ENCODE measurements at regions of chr6 and their contacts with region 1.

Region 1: GRCh38 chr6:42021847-42022754 is 28.2 kb upstream of the TAF8 start:
- DNase-seq: peak; percentile 86
- ATAC-seq: peak; percentile 46
- H3K4me3 ChIP-seq: peak overlapping the region in 3 of 5 experiments; percentile 4 to 46 (median 17)
- H3K4me3 Mint-ChIP-seq: peak overlapping the region; percentile 77
- H3K27ac ChIP-seq: peak overlapping the region; percentile 79 to 93
- H3K27ac Mint-ChIP-seq: peak overlapping the region; percentile 95
- H3K4me1 ChIP-seq: peaks cover 74 to 78% of the 10 kb centered on the region in 2 donors
- H3K4me1 Mint-ChIP-seq: peaks cover 77% of the 10 kb centered on the region
- H3K27me3 ChIP-seq: no peaks in the 10 kb centered on the region
- H3K27me3 Mint-ChIP-seq: no peaks in the 10 kb centered on the region
- CTCF ChIP-seq: peak; percentile 13

Region 2: DNA sequence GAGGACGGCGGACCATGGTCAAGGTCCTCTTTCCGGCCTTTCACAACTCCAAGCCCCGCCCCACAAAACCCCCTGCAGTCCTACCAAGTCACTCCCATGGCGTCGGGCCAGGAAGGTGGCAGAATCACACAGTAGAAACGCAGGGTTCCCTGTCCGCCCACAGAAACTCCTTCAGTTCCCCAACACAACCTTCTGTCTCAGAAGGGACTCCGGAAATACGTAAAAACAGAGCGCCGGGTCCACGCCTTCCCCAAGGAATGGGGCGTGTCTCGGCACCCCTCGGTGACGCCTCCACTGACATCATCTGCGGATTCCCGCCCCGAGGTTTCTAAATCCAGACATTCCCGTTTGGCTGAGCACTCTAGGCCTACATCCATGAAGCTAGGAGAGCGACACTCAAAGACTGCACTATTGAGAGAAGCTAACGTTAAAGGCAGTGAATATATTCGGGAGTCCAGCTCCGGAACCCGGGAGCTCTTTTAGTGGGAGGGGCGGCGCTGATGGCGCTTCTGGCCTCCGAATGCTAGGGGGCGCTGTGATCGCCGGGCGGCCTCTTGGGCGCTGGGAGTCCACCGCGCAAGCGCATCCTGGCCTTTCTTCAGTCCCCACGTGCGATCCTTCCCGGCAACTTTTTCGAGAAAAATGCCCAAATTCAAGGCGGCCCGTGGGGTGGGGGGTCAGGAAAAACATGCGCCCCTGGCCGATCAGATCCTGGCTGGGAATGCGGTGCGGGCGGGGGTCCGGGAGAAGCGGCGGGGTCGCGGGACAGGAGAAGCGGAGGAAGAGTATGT is 101.0 kb before region 1 on chr6 and contains the starts of genes BYSL and MED20:
- CTCF ChIA-PET with region 1: interaction called, 9 read pairs
- POLR2A ChIA-PET with region 1: interaction called, 4 read pairs
- intact Hi-C with region 1: loop called (anchors 1 kb)
- DNase-seq: peak; percentile 98
- ATAC-seq: peak; percentile 93
- H3K4me3 ChIP-seq: peak within 1 kb of the TSS; percentile 67 to 99 (median 97)
- H3K4me3 Mint-ChIP-seq: peak within 1 kb of the TSS; percentile 98
- H3K27ac ChIP-seq: peak within 1 kb of the TSS; percentile 91 to 96
- H3K27ac Mint-ChIP-seq: peak within 1 kb of the TSS; percentile 98
- H3K4me1 ChIP-seq: peaks cover 26 to 29% of the 10 kb centered on the region in 2 donors
- H3K4me1 Mint-ChIP-seq: peaks cover 47% of the 10 kb centered on the region
- H3K27me3 ChIP-seq: no peaks in the 10 kb centered on the region
- H3K27me3 Mint-ChIP-seq: no peaks in the 10 kb centered on the region
- CTCF ChIP-seq: peak; percentile 93
- total RNA-seq, gene BYSL: 10.5 and 11.1 TPM in 2 replicates
- total RNA-seq, gene MED20: 18.2 and 24.2 TPM in 2 replicates

Region 3: DNA sequence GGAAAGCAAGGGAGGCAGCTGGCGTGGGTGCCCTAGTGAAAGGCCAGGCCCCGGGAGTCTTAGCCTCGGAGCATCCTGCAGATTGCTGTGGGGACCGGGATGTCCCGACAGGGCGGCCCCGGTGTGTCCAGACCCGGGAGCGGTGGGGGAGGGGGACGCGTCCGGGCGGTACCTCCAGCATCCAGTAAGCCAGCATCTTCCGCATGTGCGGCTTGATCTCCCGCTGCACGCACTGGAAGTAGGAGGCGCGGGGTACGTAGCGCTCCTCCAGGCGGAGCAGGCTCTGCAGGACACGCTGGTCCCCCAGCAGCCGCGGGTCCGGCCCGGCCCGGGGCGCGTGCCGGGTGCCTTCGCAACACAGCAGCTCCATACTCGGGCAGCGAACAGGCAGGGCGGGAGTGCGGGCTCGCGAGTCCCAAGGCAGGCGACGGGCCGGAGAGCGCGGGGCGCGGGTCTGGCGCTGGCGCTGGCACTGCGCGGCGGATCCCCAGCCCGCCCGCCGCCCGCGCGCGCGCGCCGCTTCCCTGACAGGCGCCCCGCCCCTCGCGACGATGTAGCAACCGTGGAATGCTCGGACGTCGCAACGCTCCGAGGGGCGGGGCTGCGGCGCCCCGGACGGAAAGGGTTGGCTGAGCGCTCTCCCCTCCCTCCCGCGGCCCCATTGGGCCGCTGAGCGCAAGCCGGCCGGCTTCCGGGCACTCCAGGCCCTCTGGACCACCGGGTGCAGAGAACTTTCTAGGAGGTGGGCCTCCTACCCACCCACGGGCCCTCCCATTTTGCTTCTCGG is 80.6 kb before region 1 on chr6 and contains the start of gene CCND3:
- CTCF ChIA-PET with region 1: interaction called, 6 read pairs
- POLR2A ChIA-PET with region 1: no interaction called
- intact Hi-C with region 1: loop called (anchors 1 kb)
- DNase-seq: peak; percentile 87
- ATAC-seq: peak; percentile 94
- H3K4me3 ChIP-seq: peak within 1 kb of the TSS; percentile 61 to 77 (median 71)
- H3K4me3 Mint-ChIP-seq: peak within 1 kb of the TSS; percentile 85
- H3K27ac ChIP-seq: peak within 1 kb of the TSS; percentile 10 to 68
- H3K27ac Mint-ChIP-seq: peak within 1 kb of the TSS; percentile 87
- H3K4me1 ChIP-seq: peaks cover 51 to 58% of the 10 kb centered on the region in 2 donors
- H3K4me1 Mint-ChIP-seq: peaks cover 52% of the 10 kb centered on the region
- H3K27me3 ChIP-seq: no peaks in the 10 kb centered on the region
- H3K27me3 Mint-ChIP-seq: no peaks in the 10 kb centered on the region
- CTCF ChIP-seq: no peak
- total RNA-seq, gene CCND3: 136 and 145 TPM in 2 replicates

Region 4: DNA sequence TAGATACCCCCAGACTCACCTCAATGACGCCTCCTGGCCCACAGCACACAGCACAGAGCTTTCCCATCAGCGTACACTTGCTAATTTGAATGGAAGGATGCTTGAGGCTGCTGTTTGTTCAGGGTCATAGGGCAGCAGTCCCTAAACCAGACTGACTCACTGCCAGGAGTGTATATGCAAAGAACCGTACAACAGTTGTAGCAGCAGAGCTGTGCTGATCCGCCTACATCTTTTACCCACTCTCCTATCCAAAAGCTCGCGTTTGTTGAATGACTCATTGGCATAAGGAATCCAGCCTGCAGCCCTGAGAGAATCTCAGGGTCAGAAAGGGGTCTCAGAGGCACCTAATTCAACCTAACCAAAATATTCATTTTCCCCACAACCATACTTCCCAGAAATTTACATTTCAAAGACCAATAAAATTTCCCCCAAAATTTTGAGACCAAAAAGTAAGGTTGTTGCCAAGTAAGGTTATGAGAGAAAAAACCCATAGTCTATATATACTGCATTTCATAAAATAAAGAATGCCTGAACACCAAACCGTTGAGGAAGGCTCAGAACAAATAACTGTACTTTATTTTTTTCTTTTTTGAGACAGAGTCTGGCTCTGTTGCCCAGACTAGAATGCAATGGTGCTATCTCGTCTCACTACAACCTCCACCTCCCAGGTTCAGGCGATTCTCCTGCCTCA is 45.2 kb before region 1 on chr6:
- CTCF ChIA-PET with region 1: no interaction called
- POLR2A ChIA-PET with region 1: no interaction called
- intact Hi-C with region 1: loop called (anchors 5 kb)
- DNase-seq: no peak
- ATAC-seq: peak; percentile 39
- H3K4me3 ChIP-seq: no peak overlapping the region
- H3K4me3 Mint-ChIP-seq: peak overlapping the region; percentile 32
- H3K27ac ChIP-seq: peak overlapping the region in 1 of 2 donors; percentile 52
- H3K27ac Mint-ChIP-seq: peak overlapping the region; percentile 80
- H3K4me1 ChIP-seq: peaks cover 44 to 59% of the 10 kb centered on the region in 2 donors
- H3K4me1 Mint-ChIP-seq: peaks cover 62% of the 10 kb centered on the region
- H3K27me3 ChIP-seq: no peaks in the 10 kb centered on the region
- H3K27me3 Mint-ChIP-seq: no peaks in the 10 kb centered on the region
- CTCF ChIP-seq: no peak

Region 5: GRCh38 chr6:42009966-42010891 is 11.9 kb before region 1 on chr6:
- CTCF ChIA-PET with region 1: interaction called, 7 read pairs
- POLR2A ChIA-PET with region 1: interaction called, 6 read pairs
- intact Hi-C with region 1: loop called (anchors 2 kb)
- DNase-seq: no peak
- ATAC-seq: peak; percentile 26
- H3K4me3 ChIP-seq: no peak overlapping the region
- H3K4me3 Mint-ChIP-seq: peak overlapping the region; percentile 45
- H3K27ac ChIP-seq: peak overlapping the region in 1 of 2 donors; percentile 71
- H3K27ac Mint-ChIP-seq: peak overlapping the region; percentile 84
- H3K4me1 ChIP-seq: peaks cover 40 to 50% of the 10 kb centered on the region in 2 donors
- H3K4me1 Mint-ChIP-seq: peaks cover 58% of the 10 kb centered on the region
- H3K27me3 ChIP-seq: no peaks in the 10 kb centered on the region
- H3K27me3 Mint-ChIP-seq: no peaks in the 10 kb centered on the region
- CTCF ChIP-seq: no peak

Region 6: DNA sequence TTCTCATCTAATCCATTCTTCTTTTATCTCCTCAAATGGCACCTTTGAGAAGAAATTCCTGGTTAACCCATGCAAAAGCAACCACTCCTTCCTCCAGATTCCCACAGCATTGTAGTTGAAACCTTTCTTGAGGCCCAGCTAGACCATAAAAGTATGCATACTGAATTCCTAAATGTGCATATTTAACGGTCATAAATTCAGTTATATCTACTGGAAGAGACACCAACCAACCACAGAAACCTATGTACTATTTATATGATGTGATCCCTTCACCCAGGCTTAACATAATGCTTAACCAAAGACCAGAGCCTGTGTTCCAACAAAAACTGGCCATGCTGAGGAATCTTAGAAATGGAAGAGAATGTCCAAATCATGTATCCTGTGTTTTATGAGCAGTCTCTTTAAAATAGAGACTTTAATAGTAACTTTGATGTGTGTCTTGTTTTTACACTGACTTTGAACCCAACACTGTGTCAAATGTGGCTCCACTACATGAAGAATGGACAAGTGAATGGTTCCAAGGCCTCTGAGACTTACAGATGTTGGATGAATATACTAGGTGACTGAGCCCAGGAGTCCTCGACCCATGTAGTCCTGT is 16.8 kb after region 1 on chr6:
- CTCF ChIA-PET with region 1: interaction called, 130 read pairs
- POLR2A ChIA-PET with region 1: interaction called, 7 read pairs
- intact Hi-C with region 1: loop called (anchors 1 kb)
- DNase-seq: no peak
- ATAC-seq: no peak
- H3K4me3 ChIP-seq: peak overlapping the region in 3 of 5 experiments; percentile 23 to 35 (median 30)
- H3K4me3 Mint-ChIP-seq: peak overlapping the region; percentile 74
- H3K27ac ChIP-seq: peak overlapping the region; percentile 22 to 79
- H3K27ac Mint-ChIP-seq: peak overlapping the region; percentile 92
- H3K4me1 ChIP-seq: peaks cover 37 to 48% of the 10 kb centered on the region in 2 donors
- H3K4me1 Mint-ChIP-seq: peaks cover 50% of the 10 kb centered on the region
- H3K27me3 ChIP-seq: no peaks in the 10 kb centered on the region
- H3K27me3 Mint-ChIP-seq: no peaks in the 10 kb centered on the region
- CTCF ChIP-seq: no peak

Region 7: DNA sequence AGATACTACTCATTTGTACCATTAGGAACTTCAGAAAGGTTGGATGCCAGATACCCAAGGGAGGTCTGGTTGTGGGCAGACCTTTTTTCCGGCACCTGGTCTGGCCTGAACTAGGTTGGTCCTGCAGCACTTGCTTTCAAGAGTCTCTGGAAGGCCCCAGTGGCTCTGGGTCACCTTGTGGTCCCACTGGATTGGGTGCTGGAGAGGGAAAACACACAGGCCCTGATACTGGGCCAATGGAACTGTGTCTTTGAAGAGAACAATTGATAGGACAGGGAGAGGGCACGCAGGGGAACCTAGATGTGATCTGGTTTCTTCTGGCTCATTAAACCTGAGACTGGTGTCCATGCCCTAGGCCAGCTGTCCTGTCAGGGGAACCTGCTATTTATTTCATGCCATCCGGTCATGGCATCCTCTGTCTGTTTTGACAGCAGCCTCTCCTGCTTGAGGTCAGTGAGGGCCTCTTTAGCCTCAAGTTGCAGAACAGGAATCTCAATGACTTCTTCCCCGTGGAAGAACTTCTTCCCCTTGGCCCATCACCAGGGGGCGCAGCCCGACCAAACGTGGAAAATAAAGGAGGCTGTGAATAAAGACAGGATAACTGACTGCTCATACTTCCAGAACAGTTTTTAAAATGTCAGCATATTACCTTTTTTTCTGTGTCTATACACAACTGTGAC is 53.2 kb after region 1 on chr6:
- CTCF ChIA-PET with region 1: no interaction called
- POLR2A ChIA-PET with region 1: no interaction called
- intact Hi-C with region 1: no loop called
- DNase-seq: peak; percentile 56
- ATAC-seq: no peak
- H3K4me3 ChIP-seq: no peak overlapping the region
- H3K4me3 Mint-ChIP-seq: no peak overlapping the region
- H3K27ac ChIP-seq: no peak overlapping the region
- H3K27ac Mint-ChIP-seq: no peak overlapping the region
- H3K4me1 ChIP-seq: no peaks in the 10 kb centered on the region
- H3K4me1 Mint-ChIP-seq: no peaks in the 10 kb centered on the region
- H3K27me3 ChIP-seq: no peaks in the 10 kb centered on the region
- H3K27me3 Mint-ChIP-seq: no peaks in the 10 kb centered on the region
- CTCF ChIP-seq: peak; percentile 70

Region 8: DNA sequence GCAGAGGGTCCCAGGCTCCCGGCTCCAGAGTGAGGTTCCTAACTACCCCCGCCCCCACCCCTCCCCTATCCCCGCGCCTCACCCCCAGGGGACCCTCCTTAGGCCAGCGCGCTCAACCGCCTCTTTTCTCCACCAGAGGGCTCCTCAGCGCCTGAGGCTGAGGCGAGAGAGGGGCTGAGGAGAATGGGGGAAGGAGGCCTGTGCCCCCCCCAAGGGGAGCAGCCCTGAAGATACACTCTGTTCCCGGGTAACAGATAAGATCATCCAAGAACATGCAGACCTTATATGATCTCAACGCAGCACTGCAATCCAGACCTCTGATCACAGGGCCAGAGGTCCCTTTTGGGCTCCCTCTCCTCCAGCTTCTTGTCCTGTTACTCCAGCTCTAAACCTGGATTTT is 238.9 kb after region 1 on chr6:
- CTCF ChIA-PET with region 1: no interaction called
- POLR2A ChIA-PET with region 1: no interaction called
- intact Hi-C with region 1: no loop called
- DNase-seq: peak; percentile 39
- ATAC-seq: peak; percentile 31
- H3K4me3 ChIP-seq: no peak overlapping the region
- H3K4me3 Mint-ChIP-seq: no peak overlapping the region
- H3K27ac ChIP-seq: no peak overlapping the region
- H3K27ac Mint-ChIP-seq: no peak overlapping the region
- H3K4me1 ChIP-seq: no peaks in the 10 kb centered on the region
- H3K4me1 Mint-ChIP-seq: no peaks in the 10 kb centered on the region
- H3K27me3 ChIP-seq: no peaks in the 10 kb centered on the region
- H3K27me3 Mint-ChIP-seq: no peaks in the 10 kb centered on the region
- CTCF ChIP-seq: peak; percentile 38

Region 9: DNA sequence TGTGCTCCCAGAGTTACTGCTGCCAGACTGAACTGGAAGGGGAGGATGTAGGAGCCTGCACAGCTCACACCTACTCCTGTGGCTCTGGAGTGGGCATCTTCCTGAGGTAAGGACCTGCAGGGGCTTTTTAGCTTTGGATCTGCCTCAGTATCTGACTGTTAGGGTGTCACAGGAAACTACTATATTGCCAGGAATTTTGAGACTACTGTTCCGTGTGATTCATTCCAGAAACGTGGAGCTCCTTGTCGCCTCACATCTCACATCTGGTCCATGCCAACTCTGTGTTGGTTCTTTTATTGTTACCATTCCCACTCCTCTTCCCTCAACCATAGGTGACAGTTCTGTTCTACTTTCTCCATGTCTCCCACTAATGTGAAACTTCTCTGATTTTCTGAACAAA is 666.2 kb after region 1 on chr6:
- CTCF ChIA-PET with region 1: no interaction called
- POLR2A ChIA-PET with region 1: no interaction called
- intact Hi-C with region 1: no loop called
- DNase-seq: no peak
- ATAC-seq: no peak
- H3K4me3 ChIP-seq: no peak overlapping the region
- H3K4me3 Mint-ChIP-seq: no peak overlapping the region
- H3K27ac ChIP-seq: no peak overlapping the region
- H3K27ac Mint-ChIP-seq: no peak overlapping the region
- H3K4me1 ChIP-seq: no peaks in the 10 kb centered on the region
- H3K4me1 Mint-ChIP-seq: peaks cover 1% of the 10 kb centered on the region
- H3K27me3 ChIP-seq: no peaks in the 10 kb centered on the region
- H3K27me3 Mint-ChIP-seq: no peaks in the 10 kb centered on the region
- CTCF ChIP-seq: no peak

Measured in B cell (primary cell).